Spleen (tissue), 13 donors: ENCODE measurements at regions of chr1 and their contacts with region 1.

Region 1: DNA sequence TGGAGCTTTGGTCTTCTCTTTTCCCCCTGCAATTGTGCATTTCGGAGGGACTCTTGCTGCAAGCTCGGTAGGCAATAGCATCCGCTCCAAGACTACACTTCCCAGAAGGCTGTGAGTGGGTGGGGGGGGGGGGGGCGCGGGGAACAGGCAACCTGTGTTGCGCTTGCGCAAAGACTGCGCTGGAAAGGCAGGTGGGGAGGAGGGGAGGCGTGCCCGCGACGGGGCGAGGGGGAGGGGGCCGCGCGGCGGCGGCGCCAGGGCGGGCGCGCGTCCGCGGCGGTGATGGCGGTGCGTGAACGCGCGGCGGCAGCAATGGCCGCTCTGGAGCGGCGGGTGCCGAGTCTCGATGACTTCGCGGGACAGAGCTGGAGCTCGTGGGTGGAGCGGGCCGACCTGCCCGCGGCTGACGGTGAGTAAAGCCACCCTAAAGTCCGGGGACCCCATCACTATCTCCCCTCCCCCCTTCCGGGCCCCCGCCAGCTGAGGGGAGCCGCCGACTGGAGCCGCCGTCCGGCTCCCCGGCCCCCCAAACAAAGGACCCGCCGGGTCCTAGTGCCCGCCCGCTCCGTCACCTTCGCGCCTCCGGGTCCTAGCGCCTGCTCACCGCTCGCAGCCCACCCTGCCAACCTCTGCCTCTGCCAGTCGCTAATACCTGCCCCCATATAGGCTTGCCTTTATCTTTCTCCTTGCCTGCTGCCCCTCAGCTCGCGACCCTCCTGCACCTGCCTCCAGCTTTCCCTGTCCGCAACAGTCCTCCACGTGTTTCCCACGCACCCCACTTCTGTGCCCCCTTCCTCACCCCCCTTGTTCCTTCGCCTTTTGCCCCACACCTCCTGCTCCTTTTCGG is at the start of gene ATXN7L2:
- DNase-seq: peak; percentile 97
- H3K4me3 ChIP-seq: peak within 1 kb of the TSS; percentile 53 to 90 (median 70)
- H3K27ac ChIP-seq: peak within 1 kb of the TSS; percentile 93 to 98 (median 96)
- H3K4me1 ChIP-seq: peaks cover 7 to 51% (median 29%) of the 10 kb centered on the region in 6 donors
- H3K27me3 ChIP-seq: peaks cover 0 to 8% (median 0%) of the 10 kb centered on the region in 7 donors
- CTCF ChIP-seq: peak in 2 of 11 experiments; percentile 5 to 22
- POLR2A ChIP-seq: peak in 2 of 3 donors; percentile 39 to 62
- total RNA-seq, gene ATXN7L2: 7.9 to 11.9 (median 8.7) TPM

Region 2: DNA sequence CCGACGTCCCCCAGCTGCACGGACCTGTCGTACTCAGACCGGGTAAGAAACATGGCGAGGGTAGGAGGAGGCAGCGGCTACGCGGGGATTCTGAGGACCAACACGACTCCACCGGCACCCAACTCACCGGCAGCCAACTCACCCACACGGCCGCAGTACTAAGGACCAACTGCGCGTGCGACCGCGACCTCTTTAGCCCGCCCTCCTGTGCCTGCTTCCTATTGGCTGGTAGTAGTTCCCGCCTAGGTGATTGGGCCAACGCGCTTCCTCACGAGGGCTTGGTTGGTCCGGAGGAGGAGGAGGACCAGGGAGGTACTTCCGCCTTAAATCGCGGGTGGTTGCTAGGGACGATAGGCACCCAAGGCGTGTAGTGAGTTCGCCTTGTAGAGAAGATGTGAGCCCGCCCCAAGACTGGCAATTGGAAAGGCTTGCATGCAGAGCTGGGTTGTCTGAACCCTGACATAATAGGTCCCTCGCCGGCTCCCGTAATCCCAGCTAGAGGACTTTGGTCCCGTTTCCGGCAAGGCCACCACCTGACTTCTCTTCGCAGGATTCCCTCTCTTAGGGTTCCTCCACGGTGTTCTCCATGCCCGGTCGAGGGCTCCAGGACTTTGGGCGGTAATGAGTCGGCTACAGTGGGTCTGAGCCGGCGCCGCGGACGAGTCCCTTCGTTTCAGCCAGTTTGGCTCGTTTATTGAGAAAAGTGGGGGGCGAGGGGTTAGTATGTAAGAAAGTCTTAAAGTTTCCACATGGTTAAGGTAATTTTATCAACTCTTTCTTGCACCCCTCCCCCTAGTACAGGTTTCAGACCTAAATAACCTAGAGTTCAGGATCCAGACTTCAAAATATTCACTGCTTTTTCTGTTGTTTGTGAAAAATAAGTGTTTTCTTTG is 57.4 kb before region 1 on chr1 and contains the start of gene PSMA5:
- intact Hi-C with region 1: loop called (anchors 2 kb)
- DNase-seq: peak; percentile 97
- H3K4me3 ChIP-seq: peak within 1 kb of the TSS; percentile 87 to 99 (median 92)
- H3K27ac ChIP-seq: peak within 1 kb of the TSS; percentile 85 to 96 (median 90)
- H3K4me1 ChIP-seq: peaks cover 13 to 56% (median 47%) of the 10 kb centered on the region in 6 donors
- H3K27me3 ChIP-seq: no peaks in the 10 kb centered on the region
- CTCF ChIP-seq: peak in 3 of 11 experiments; percentile 15 to 39 (median 37)
- POLR2A ChIP-seq: peak in 2 of 3 donors; percentile 57 to 79
- total RNA-seq, gene PSMA5: 29.9 to 87.0 (median 62.2) TPM